ENCODE measurements at regions of chr10 and their contacts with region 1.

Region 1: DNA sequence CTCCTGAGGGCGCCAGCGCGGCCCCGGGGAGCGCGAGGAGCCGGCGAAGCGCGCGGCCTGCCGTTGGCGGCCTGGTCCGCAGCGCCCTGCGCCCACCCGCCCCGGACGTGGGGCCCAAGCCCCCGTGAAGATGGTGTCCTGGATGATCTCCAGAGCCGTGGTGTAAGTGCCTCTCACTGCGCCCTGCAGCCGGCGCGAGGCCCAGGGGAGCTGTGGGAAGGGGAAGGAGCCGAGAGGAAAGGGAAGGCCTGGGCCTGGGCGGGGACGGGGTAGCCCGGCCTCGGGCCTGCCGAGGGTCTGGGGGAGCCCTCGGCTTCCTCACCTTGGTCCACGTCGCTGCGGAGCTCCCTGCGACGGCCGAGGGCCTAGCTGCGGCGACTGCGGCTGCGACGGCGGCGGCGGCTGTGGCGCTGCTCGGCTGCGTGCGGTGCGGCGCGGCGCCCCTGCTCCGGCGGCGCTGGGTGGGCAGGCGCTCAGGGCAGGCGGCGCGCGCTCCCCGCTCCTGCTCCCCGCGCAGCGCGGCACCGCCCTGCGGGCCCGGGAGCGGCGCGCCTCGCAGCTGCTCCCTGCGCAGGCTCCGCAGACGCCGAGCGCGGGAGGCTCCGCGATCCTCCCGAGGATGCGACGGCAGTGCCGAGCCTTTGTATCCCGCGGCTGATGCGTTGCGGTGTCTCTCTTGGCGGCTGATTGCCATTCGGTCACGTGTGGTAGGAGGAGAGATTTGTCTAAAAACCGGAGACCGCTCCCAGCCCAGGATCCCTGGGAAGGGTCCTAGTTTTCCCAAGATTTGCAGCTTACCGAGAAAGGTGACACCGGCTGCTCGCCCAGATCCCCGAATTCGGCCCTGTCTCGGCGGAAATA is 445 bp downstream of the REEP3 start:
- DNase-seq: peak; percentile 49
- H3K4me3 Mint-ChIP-seq: peak overlapping the region; percentile 83
- H3K27ac Mint-ChIP-seq: peak overlapping the region; percentile 88
- H3K4me1 Mint-ChIP-seq: peaks cover 63% of the 10 kb centered on the region
- H3K27me3 Mint-ChIP-seq: no peaks in the 10 kb centered on the region

Region 2: GRCh38 chr10:63084690-63085382 is 436.8 kb before region 1 on chr10:
- intact Hi-C with region 1: no loop called
- DNase-seq: no peak
- H3K4me3 Mint-ChIP-seq: no peak overlapping the region
- H3K27ac Mint-ChIP-seq: no peak overlapping the region
- H3K4me1 Mint-ChIP-seq: peaks cover 12% of the 10 kb centered on the region
- H3K27me3 Mint-ChIP-seq: peaks cover 24% of the 10 kb centered on the region

Region 3: DNA sequence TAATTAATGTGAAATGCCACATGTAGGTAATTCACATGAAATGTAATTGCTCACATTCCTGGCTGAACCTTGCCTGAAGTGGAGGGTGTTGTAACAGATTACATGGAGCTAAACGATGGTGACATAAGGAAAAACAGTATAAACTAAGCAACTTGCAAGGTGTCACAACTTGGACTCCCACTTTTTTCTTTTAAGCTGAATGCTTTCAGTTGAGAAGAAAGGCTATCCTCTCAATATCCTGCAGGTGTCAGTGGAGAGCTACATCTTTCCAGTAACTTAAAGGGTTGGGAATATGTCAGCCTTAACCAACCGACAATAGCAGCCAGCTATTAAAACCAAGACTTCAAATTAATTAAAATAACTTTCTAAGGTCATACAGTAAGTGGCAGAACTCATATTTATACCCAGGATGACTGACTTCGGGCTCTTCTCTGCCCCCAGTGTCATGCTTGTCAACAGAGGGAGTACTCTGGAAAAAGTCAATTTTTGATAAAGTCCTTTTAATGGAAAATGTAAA is 354.8 kb before region 1 on chr10:
- intact Hi-C with region 1: loop called (anchors 2 kb)
- DNase-seq: peak; percentile 17
- H3K4me3 Mint-ChIP-seq: no peak overlapping the region
- H3K27ac Mint-ChIP-seq: no peak overlapping the region
- H3K4me1 Mint-ChIP-seq: peaks cover 41% of the 10 kb centered on the region
- H3K27me3 Mint-ChIP-seq: no peaks in the 10 kb centered on the region

Region 4: DNA sequence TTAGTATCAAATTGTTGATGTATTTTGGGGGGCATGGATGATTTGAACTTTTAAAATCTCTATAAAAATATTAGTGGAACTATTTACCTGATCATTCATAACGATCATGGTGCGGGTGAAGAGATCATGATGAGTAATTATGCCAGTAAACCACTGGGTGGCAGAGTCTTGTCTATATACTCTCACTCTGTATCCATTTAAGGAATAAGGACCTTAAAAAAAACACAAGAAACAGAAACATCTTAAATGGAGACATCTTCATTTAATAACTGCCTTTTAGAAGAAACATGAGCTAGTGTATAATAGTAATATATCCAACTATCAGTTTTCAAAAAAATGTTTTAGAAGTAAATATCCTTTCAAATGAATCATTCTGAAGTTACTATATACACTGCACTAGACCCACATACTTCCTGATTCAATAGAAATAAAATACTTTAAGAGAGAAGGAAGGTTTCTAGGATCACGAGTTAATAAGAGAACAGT is 304.5 kb before region 1 on chr10:
- intact Hi-C with region 1: loop called (anchors 5 kb)
- DNase-seq: no peak
- H3K4me3 Mint-ChIP-seq: no peak overlapping the region
- H3K27ac Mint-ChIP-seq: peak overlapping the region; percentile 13
- H3K4me1 Mint-ChIP-seq: peaks cover 51% of the 10 kb centered on the region
- H3K27me3 Mint-ChIP-seq: no peaks in the 10 kb centered on the region

Region 5: GRCh38 chr10:63388421-63389031 is 133.1 kb before region 1 on chr10:
- intact Hi-C with region 1: loop called (anchors 5 kb)
- DNase-seq: no peak
- H3K4me3 Mint-ChIP-seq: peak overlapping the region; percentile 48
- H3K27ac Mint-ChIP-seq: peak overlapping the region; percentile 31
- H3K4me1 Mint-ChIP-seq: peaks cover 55% of the 10 kb centered on the region
- H3K27me3 Mint-ChIP-seq: peaks cover 2% of the 10 kb centered on the region

Region 6: DNA sequence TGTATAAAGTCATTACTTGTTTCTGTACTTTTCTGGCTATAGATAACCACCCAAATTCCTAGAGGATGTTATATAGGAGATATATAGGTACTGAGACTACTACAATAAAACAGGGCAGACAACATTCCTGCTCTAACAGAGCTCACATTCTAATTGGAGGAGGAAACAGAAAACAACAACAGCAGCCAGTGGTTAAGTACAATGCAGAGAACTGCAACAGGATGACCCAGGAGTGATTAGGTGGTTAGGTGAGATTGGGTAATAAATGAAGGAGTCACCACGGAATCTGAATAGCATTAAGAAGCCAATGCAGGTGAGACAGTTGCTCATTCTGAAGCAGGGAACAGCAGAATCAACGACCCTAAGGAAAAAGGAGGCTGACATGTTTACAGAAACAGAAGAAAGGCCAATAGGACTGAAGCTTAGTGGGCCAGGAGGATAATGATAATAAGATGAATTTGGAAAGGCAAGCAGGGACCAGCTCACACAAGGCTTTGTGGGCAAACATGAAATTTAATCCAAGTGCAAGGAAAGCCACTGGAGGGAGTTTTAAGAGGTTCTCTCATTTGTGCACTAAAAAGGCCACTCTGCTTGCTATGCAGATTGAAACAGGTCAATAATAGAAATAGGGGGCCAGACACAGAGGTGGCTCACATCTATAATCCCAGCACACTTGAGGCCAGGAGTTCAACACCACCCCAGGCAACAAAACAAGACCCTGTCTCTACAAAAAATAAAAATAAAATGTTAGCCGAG is 17.3 kb before region 1 on chr10:
- intact Hi-C with region 1: no loop called
- DNase-seq: no peak
- H3K4me3 Mint-ChIP-seq: no peak overlapping the region
- H3K27ac Mint-ChIP-seq: no peak overlapping the region
- H3K4me1 Mint-ChIP-seq: peaks cover 21% of the 10 kb centered on the region
- H3K27me3 Mint-ChIP-seq: no peaks in the 10 kb centered on the region

Region 7: GRCh38 chr10:63547628-63548360 is 26.1 kb after region 1 on chr10:
- intact Hi-C with region 1: no loop called
- DNase-seq: no peak
- H3K4me3 Mint-ChIP-seq: no peak overlapping the region
- H3K27ac Mint-ChIP-seq: no peak overlapping the region
- H3K4me1 Mint-ChIP-seq: peaks cover 6% of the 10 kb centered on the region
- H3K27me3 Mint-ChIP-seq: no peaks in the 10 kb centered on the region

Region 8: GRCh38 chr10:63573068-63573697 is 51.5 kb after region 1 on chr10:
- intact Hi-C with region 1: loop called (anchors 5 kb)
- DNase-seq: no peak
- H3K4me3 Mint-ChIP-seq: peak overlapping the region; percentile 15
- H3K27ac Mint-ChIP-seq: peak overlapping the region; percentile 72
- H3K4me1 Mint-ChIP-seq: peaks cover 20% of the 10 kb centered on the region
- H3K27me3 Mint-ChIP-seq: no peaks in the 10 kb centered on the region

Region 9: GRCh38 chr10:63595072-63595471 is 73.4 kb after region 1 on chr10:
- intact Hi-C with region 1: no loop called
- DNase-seq: no peak
- H3K4me3 Mint-ChIP-seq: no peak overlapping the region
- H3K27ac Mint-ChIP-seq: peak overlapping the region; percentile 9
- H3K4me1 Mint-ChIP-seq: no peaks in the 10 kb centered on the region
- H3K27me3 Mint-ChIP-seq: no peaks in the 10 kb centered on the region

Region 10: DNA sequence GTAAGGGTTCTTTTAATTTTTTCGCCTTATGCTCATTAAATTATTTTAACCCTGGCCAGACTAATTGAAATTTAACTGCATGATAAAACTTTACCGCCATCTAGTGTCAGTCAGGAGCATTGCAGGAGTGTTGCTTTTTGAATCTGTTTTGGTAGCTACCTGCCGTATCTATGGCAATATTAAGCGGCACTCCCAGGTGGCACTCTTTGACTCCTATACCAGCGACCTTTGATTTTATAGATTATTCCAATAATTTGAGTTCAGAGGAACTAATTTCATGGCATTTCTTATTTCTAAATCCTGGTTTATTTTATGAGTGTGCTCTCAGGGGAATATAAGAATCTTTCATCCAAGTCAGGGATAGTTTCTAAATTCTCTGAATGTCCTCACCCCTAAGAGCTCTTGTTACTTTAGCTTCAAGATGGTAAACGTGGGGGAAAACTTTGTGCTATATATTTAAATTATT is 198.5 kb after region 1 on chr10:
- intact Hi-C with region 1: loop called (anchors 2 kb)
- DNase-seq: peak; percentile 17
- H3K4me3 Mint-ChIP-seq: peak overlapping the region; percentile 51
- H3K27ac Mint-ChIP-seq: no peak overlapping the region
- H3K4me1 Mint-ChIP-seq: peaks cover 34% of the 10 kb centered on the region
- H3K27me3 Mint-ChIP-seq: peaks cover 4% of the 10 kb centered on the region

Measured in activated T-helper 1 cell treated with anti-CD3 and anti-CD28 coated beads, Interleukin-12 subunit alpha, Interleukin-12 subunit beta, Interleukin-2, Interleukin-4 antibody, amounts not matched to agents 30 ng/mL and 10 ng/mL and 1 ng/mL, durations not matched to agents 14 hours and 24 hours and 36 hours (primary cell).